Dorsolateral prefrontal cortex (tissue), 120 donors: ENCODE measurements at regions of chr4 and their contacts with region 1.

Region 1: GRCh38 chr4:84582302-84583000 is 476 bp upstream of the CDS1 start:
- DNase-seq: peak; percentile 73 to 98 (median 88)
- H3K4me3 ChIP-seq: peak overlapping the region; percentile 63 to 99 (median 85)
- H3K27ac ChIP-seq: peak overlapping the region in 56 of 59 donors; percentile 11 to 95 (median 74)
- H3K27me3 ChIP-seq: no peaks in the 10 kb centered on the region
- CTCF ChIP-seq: peak in 2 of 56 donors; percentile 4 to 12

Region 2: DNA sequence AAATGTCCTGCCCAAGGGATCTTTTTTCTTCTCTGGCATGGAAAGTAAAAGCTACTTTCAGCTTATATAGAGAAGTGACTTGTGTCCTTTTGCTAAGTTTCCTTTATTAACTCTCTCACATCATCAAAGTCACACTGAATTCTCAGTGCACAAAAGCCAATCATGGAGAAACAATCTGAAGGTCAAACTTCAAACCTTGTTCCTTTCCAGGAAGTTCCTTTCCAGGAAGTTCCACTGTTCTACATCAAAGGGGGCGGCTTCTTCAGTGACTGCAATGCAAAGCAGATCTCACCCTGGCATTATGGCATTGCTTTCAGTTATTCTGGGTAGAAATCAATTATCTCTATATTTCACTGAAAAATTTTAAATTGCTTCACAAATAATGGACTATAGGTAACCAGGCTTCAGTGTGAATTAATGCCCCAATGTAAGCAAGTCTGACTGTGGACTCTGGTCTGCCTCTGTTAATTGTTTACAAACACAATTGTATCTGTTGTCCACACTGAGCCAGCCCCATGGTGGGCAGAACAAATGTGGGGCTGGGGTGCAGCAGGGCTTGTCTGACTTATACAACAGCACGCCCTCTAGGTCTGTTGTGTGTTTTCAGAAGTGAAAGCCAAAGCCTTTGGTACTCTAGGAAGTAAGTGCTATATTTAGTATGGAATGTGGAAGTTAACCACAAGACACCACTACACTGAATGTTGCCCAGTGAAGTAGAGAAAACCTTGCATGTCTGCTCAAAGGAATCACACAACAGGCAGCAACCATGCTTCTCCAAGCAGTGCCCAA is 99.2 kb after region 1 on chr4:
- intact Hi-C with region 1: loop called in 1 of 2 experiments (anchors 10 kb)
- DNase-seq: peak in 2 of 10 donors; percentile 31 to 45
- H3K4me3 ChIP-seq: peak overlapping the region in 2 of 59 donors; percentile 9 to 22
- H3K27ac ChIP-seq: peak overlapping the region in 57 of 59 donors; percentile 3 to 86 (median 58)
- H3K27me3 ChIP-seq: no peaks in the 10 kb centered on the region
- CTCF ChIP-seq: peak in 20 of 56 donors; percentile 5 to 47 (median 17)

Region 3: GRCh38 chr4:84750253-84750959 is 168.0 kb after region 1 on chr4:
- intact Hi-C with region 1: loop called in 1 of 2 experiments (anchors 10 kb)
- DNase-seq: no peak
- H3K4me3 ChIP-seq: peak overlapping the region in 1 of 59 donors; percentile 2
- H3K27ac ChIP-seq: peak overlapping the region in 22 of 59 donors; percentile 0 to 57 (median 16)
- H3K27me3 ChIP-seq: no peaks in the 10 kb centered on the region
- CTCF ChIP-seq: peak; percentile 69 to 95 (median 83)